ENCODE measurements at regions of chr4 and their contacts with region 1.

Region 1: GRCh38 chr4:141307241-141307689 is 86.6 kb downstream of the ZNF330 start:
- DNase-seq: peak; percentile 95
- ATAC-seq: peak; percentile 99
- H3K4me3 ChIP-seq: no peak overlapping the region
- H3K27ac ChIP-seq: no peak overlapping the region
- H3K4me1 ChIP-seq: peaks cover 25% of the 10 kb centered on the region
- H3K27me3 ChIP-seq: no peaks in the 10 kb centered on the region
- CTCF ChIP-seq: peak; percentile 86 to 89 (median 86)
- EP300 ChIP-seq: peak; percentile 89 to 90
- POLR2A ChIP-seq: no peak
- RAD21 ChIP-seq: peak; percentile 96

Region 2: DNA sequence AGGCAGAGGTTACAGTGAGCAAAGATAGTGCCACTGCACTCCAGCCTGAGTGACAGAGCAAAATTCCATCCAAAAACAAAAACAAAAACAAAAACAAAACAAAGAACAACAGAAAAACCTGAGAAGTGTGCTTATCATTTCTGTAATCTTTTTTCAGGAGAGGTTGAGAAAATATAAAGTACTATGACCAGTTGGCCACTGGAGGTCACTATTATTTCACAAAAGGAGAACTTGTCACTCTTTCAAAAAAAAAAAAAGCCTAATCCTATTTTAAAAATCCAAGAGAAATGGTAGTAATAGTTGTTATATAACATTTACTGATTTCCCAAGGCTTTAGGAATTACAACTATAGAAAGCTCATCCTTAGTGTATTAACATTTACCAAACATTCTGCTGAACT is 149.0 kb before region 1 on chr4:
- CTCF ChIA-PET with region 1: interaction called, 3 read pairs
- POLR2A ChIA-PET with region 1: no interaction called
- RAD21 ChIA-PET with region 1: no interaction called
- SMC1A ChIA-PET with region 1: no interaction called
- in situ Hi-C with region 1: no loop called
- intact Hi-C with region 1: loop called (anchors 5 kb)
- DNase-seq: no peak
- ATAC-seq: 0 out of 3 replicates have a peak, but pooled peaks have one; percentile 38
- H3K4me3 ChIP-seq: no peak overlapping the region
- H3K27ac ChIP-seq: no peak overlapping the region
- H3K4me1 ChIP-seq: no peaks in the 10 kb centered on the region
- H3K27me3 ChIP-seq: no peaks in the 10 kb centered on the region
- CTCF ChIP-seq: peak; percentile 17 to 52 (median 36); a peak in 2 of 6 replicates
- EP300 ChIP-seq: no peak
- POLR2A ChIP-seq: no peak
- RAD21 ChIP-seq: peak; percentile 68

Region 3: GRCh38 chr4:141275834-141276233 is 31.4 kb before region 1 on chr4:
- CTCF ChIA-PET with region 1: no interaction called
- POLR2A ChIA-PET with region 1: no interaction called
- RAD21 ChIA-PET with region 1: no interaction called
- SMC1A ChIA-PET with region 1: no interaction called
- in situ Hi-C with region 1: no loop called
- intact Hi-C with region 1: no loop called
- DNase-seq: no peak
- ATAC-seq: no peak
- H3K4me3 ChIP-seq: no peak overlapping the region
- H3K27ac ChIP-seq: no peak overlapping the region
- H3K4me1 ChIP-seq: no peaks in the 10 kb centered on the region
- H3K27me3 ChIP-seq: no peaks in the 10 kb centered on the region
- CTCF ChIP-seq: no peak
- EP300 ChIP-seq: no peak
- POLR2A ChIP-seq: no peak
- RAD21 ChIP-seq: no peak

Region 4: GRCh38 chr4:141375855-141376254 is 68.6 kb after region 1 on chr4:
- CTCF ChIA-PET with region 1: no interaction called
- POLR2A ChIA-PET with region 1: no interaction called
- RAD21 ChIA-PET with region 1: no interaction called
- SMC1A ChIA-PET with region 1: no interaction called
- in situ Hi-C with region 1: no loop called
- intact Hi-C with region 1: loop called (anchors 2 kb)
- DNase-seq: no peak
- ATAC-seq: no peak
- H3K4me3 ChIP-seq: no peak overlapping the region
- H3K27ac ChIP-seq: no peak overlapping the region
- H3K4me1 ChIP-seq: peaks cover 4% of the 10 kb centered on the region; the same call in 1 of the 2 replicates
- H3K27me3 ChIP-seq: no peaks in the 10 kb centered on the region
- CTCF ChIP-seq: no peak; a peak in 1 of 6 replicates
- EP300 ChIP-seq: no peak
- POLR2A ChIP-seq: no peak
- RAD21 ChIP-seq: peak; percentile 22; the same call in 1 of the 2 replicates

Region 5: GRCh38 chr4:141388483-141388882 is 81.2 kb after region 1 on chr4:
- CTCF ChIA-PET with region 1: no interaction called
- POLR2A ChIA-PET with region 1: no interaction called
- RAD21 ChIA-PET with region 1: no interaction called
- SMC1A ChIA-PET with region 1: no interaction called
- in situ Hi-C with region 1: no loop called
- intact Hi-C with region 1: no loop called
- DNase-seq: no peak
- ATAC-seq: no peak
- H3K4me3 ChIP-seq: no peak overlapping the region
- H3K27ac ChIP-seq: no peak overlapping the region
- H3K4me1 ChIP-seq: no peaks in the 10 kb centered on the region
- H3K27me3 ChIP-seq: no peaks in the 10 kb centered on the region
- CTCF ChIP-seq: no peak
- EP300 ChIP-seq: no peak
- POLR2A ChIP-seq: no peak
- RAD21 ChIP-seq: no peak

Region 6: DNA sequence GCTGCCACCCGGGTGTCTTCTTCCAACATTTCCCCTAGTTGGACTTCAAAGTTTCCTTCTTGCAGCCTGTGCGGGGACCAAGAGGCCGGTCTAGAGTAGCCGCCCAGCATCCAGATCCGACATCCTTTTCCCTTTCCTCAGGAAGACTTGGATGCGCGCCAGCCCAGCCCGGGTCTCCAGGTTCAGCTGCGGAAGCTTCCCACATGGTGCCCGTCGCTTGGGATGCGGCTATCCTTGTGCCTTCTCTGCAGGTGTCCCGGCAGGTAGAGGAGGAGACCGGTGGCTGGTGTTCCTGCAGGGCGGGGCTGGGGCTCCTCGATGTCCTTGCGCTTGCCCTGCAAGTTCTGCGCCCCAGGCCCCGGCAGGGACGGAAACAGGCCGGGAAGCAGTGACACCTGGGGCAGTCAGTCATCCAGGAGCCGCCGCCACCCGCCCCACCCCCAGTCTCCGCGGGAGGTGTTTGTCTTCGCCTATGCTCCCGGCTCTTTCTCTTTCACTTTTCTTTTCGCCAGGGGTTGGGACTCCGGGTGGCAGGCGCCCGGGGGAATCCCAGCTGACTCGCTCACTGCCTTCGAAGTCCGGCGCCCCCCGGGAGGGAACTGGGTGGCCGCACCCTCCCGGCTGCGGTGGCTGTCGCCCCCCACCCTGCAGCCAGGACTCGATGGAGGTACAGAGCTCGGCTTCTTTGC is 329.0 kb after region 1 on chr4 and contains the start of gene IL15:
- CTCF ChIA-PET with region 1: no interaction called
- POLR2A ChIA-PET with region 1: no interaction called
- RAD21 ChIA-PET with region 1: interaction called, 5 read pairs
- SMC1A ChIA-PET with region 1: interaction called, 4 read pairs
- in situ Hi-C with region 1: no loop called
- intact Hi-C with region 1: loop called (anchors 5 kb)
- DNase-seq: no peak
- ATAC-seq: peak; percentile 79
- H3K4me3 ChIP-seq: peak within 1 kb of the TSS; percentile 96
- H3K27ac ChIP-seq: peak within 1 kb of the TSS; percentile 90
- H3K4me1 ChIP-seq: peaks cover 8% of the 10 kb centered on the region
- H3K27me3 ChIP-seq: no peaks in the 10 kb centered on the region
- CTCF ChIP-seq: no peak
- EP300 ChIP-seq: no peak
- POLR2A ChIP-seq: peak; percentile 62; the same call in 1 of the 2 replicates
- RAD21 ChIP-seq: no peak
- polyA plus RNA-seq, gene IL15: 6.0 to 7.3 TPM

Region 7: DNA sequence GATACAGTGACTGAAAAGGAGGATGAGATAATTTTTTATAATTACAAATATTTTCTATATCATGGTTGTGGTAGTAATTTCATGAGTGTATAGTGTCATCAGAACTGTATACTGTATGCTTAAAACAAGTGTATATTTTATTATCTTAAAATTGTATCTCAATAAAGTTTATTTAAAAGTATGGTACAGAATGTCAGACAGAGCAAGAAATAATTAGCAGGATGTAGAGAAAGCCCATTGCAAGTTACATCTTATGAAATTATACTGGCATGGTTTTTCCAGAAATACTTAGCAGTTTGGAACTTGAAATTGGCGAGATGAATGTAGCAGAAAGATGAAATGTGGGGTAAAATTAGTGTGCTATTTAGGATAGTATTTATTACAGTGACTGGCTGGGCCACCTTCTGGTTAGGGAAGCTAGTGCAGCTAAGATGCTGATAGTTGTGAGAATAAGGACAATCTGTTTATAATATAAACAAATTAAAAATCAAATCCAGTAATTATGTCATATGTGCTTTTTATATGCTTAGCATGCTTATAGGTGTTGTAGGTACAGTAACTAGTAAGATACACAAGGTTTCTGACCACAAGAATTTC is 403.8 kb after region 1 on chr4:
- CTCF ChIA-PET with region 1: interaction called, 6 read pairs
- POLR2A ChIA-PET with region 1: no interaction called
- RAD21 ChIA-PET with region 1: interaction called, 11 read pairs
- SMC1A ChIA-PET with region 1: interaction called, 4 read pairs
- in situ Hi-C with region 1: no loop called
- intact Hi-C with region 1: loop called (anchors 1 kb)
- DNase-seq: no peak
- ATAC-seq: peak; percentile 78
- H3K4me3 ChIP-seq: no peak overlapping the region
- H3K27ac ChIP-seq: no peak overlapping the region
- H3K4me1 ChIP-seq: no peaks in the 10 kb centered on the region; the same call in 1 of the 2 replicates
- H3K27me3 ChIP-seq: no peaks in the 10 kb centered on the region
- CTCF ChIP-seq: peak; percentile 49 to 56 (median 54)
- EP300 ChIP-seq: no peak
- POLR2A ChIP-seq: no peak
- RAD21 ChIP-seq: peak; percentile 63

Region 8: GRCh38 chr4:142846729-142847596 is 1539.7 kb after region 1 on chr4:
- CTCF ChIA-PET with region 1: interaction called, 11 read pairs
- POLR2A ChIA-PET with region 1: no interaction called
- RAD21 ChIA-PET with region 1: no interaction called
- SMC1A ChIA-PET with region 1: interaction called, 6 read pairs
- in situ Hi-C with region 1: loop called (anchors 10 kb)
- intact Hi-C with region 1: loop called (anchors 1 kb)
- DNase-seq: no peak
- ATAC-seq: peak; percentile 90
- H3K4me3 ChIP-seq: no peak overlapping the region
- H3K27ac ChIP-seq: no peak overlapping the region
- H3K4me1 ChIP-seq: no peaks in the 10 kb centered on the region
- H3K27me3 ChIP-seq: peaks cover 4 to 6% of the 10 kb centered on the region in 2 experiments; a peak in 2 of 4 replicates
- CTCF ChIP-seq: peak; percentile 31 to 46 (median 31); a peak in 5 of 6 replicates
- EP300 ChIP-seq: no peak
- POLR2A ChIP-seq: no peak
- RAD21 ChIP-seq: peak; percentile 51

Measured in GM12878 (cell line).